CD14-positive monocyte (primary cell): ENCODE measurements at regions of chr12 and their contacts with region 1.

Region 1: DNA sequence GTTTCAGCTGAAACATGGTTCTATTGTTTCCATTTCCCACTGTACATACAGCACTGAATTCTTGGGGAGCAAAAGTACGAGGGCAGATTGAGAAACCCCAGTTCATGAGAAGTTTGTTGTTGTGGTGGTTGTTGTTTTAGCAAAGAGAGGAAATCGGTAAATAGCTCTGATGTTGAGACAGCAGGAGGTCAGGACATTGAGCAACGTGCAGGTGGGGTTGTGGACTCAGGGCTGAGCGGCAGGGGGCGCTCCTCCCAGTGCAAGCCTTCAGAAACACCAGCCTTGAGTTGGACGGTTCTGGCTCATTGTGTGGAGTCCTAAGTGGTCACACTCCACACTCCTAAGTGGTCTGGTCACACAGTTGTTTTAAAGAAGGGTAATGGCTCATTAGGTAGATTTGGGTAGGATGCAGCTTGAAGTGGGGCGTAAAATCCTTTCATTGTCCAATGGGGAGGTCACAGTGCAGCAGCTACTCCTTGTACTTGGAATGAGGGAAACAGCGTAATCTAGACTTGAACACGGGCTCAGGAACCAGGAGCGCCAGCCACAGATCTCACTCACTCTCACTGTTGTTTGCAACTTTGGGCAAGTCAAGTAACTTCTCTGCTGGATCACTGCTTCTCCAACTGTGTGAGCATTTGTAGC is 14.5 kb upstream of the PWP1 start:
- DNase-seq: peak in 2 of 3 donors; percentile 32 to 44
- H3K4me3 ChIP-seq: no peak overlapping the region
- H3K4me3 Mint-ChIP-seq: no peak overlapping the region
- H3K27ac ChIP-seq: no peak overlapping the region
- H3K27ac Mint-ChIP-seq: peak overlapping the region in 1 of 7 donors; percentile 78
- H3K4me1 ChIP-seq: peaks cover 0 to 10% of the 10 kb centered on the region in 2 donors
- H3K4me1 Mint-ChIP-seq: peaks cover 7% of the 10 kb centered on the region
- H3K27me3 ChIP-seq: no peaks in the 10 kb centered on the region
- H3K27me3 Mint-ChIP-seq: peaks cover 4 to 17% (median 6%) of the 10 kb centered on the region in 3 donors
- CTCF ChIP-seq: peak; percentile 73

Region 2: DNA sequence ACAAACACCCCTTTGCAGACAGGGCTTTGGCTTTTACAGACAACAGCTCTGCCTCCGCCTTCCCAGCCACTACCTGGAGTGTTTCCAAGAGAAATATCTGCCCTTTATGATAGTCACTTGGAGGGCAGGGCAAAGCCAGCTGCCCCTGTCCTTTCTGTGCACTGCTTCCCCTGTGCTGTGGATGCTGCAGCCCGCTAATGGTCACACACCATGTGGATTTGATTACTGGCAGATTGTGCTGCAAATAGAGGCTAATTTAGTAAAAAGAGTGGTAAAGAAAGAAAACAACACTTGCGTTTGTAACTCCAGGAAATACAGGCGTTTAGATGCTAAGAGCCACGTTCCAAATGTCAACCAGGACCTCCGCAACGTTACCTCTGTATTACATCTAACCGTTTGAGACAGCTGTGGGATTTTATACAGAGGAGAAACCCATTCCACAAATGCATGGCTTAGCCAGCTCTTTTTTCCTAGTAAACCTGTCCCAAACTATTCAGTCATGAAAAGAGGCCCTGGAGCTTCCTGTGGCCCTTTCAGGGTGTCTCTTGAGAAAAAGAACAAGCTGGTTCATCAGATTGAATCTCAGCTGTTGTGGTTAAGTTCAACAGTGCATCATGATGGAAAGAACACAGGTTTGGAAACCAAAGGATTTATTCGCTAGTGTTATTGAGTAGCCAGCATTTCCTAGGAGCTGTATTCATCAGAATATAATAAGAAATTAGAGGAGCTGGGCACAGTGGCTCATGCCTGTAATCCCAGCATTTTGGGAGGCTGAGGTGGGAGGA is 15.6 kb before region 1 on chr12:
- intact Hi-C with region 1: no loop called
- DNase-seq: no peak
- H3K4me3 ChIP-seq: no peak overlapping the region
- H3K4me3 Mint-ChIP-seq: no peak overlapping the region
- H3K27ac ChIP-seq: no peak overlapping the region
- H3K27ac Mint-ChIP-seq: peak overlapping the region in 1 of 7 donors; percentile 72
- H3K4me1 ChIP-seq: peaks cover under 1 to 8% of the 10 kb centered on the region in 2 donors
- H3K4me1 Mint-ChIP-seq: peaks cover 6% of the 10 kb centered on the region
- H3K27me3 ChIP-seq: no peaks in the 10 kb centered on the region
- H3K27me3 Mint-ChIP-seq: no peaks in the 10 kb centered on the region
- CTCF ChIP-seq: no peak

Region 3: GRCh38 chr12:107955966-107956643 is 285.0 kb after region 1 on chr12:
- intact Hi-C with region 1: no loop called
- DNase-seq: no peak
- H3K4me3 ChIP-seq: no peak overlapping the region
- H3K4me3 Mint-ChIP-seq: no peak overlapping the region
- H3K27ac ChIP-seq: no peak overlapping the region
- H3K27ac Mint-ChIP-seq: peak overlapping the region in 2 of 7 donors; percentile 10 to 14
- H3K4me1 ChIP-seq: no peaks in the 10 kb centered on the region
- H3K4me1 Mint-ChIP-seq: no peaks in the 10 kb centered on the region
- H3K27me3 ChIP-seq: no peaks in the 10 kb centered on the region
- H3K27me3 Mint-ChIP-seq: peaks cover 5 to 14% (median 8%) of the 10 kb centered on the region in 3 donors
- CTCF ChIP-seq: no peak

Region 4: DNA sequence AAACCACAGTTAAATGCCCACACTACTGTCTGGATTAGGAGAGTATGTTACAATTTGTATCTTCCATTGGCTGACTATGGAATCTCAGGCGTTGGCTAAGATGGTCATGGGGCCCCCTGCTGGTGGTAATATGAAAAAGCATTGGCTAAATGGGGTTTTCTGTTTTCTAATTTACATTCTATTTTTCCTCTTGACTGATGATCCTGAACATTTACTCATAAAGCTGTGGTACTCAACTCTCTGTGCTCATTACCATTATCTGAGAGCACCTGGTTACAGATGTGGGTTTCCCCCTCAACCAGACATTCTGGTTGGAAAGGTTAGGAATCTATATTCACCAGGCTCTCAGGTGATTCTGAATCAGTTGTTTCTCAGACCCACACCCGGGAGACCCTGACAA is 522.8 kb after region 1 on chr12:
- intact Hi-C with region 1: loop called in 1 of 2 experiments (anchors 10 kb)
- DNase-seq: peak; percentile 5 to 28 (median 26)
- H3K4me3 ChIP-seq: no peak overlapping the region
- H3K4me3 Mint-ChIP-seq: no peak overlapping the region
- H3K27ac ChIP-seq: no peak overlapping the region
- H3K27ac Mint-ChIP-seq: no peak overlapping the region
- H3K4me1 ChIP-seq: no peaks in the 10 kb centered on the region
- H3K4me1 Mint-ChIP-seq: no peaks in the 10 kb centered on the region
- H3K27me3 ChIP-seq: no peaks in the 10 kb centered on the region
- H3K27me3 Mint-ChIP-seq: peaks cover 1 to 7% (median 3%) of the 10 kb centered on the region in 3 donors
- CTCF ChIP-seq: peak; percentile 92

Region 5: GRCh38 chr12:108514973-108515814 is 844.1 kb after region 1 on chr12 and contains the start of gene FICD:
- intact Hi-C with region 1: loop called in 1 of 2 experiments (anchors 10 kb)
- DNase-seq: peak; percentile 98
- H3K4me3 ChIP-seq: peak within 1 kb of the TSS; percentile 66 to 93 (median 85)
- H3K4me3 Mint-ChIP-seq: peak within 1 kb of the TSS; percentile 89 to 93
- H3K27ac ChIP-seq: peak within 1 kb of the TSS; percentile 49 to 87
- H3K27ac Mint-ChIP-seq: peak within 1 kb of the TSS; percentile 84 to 96 (median 93)
- H3K4me1 ChIP-seq: peaks cover 13 to 24% of the 10 kb centered on the region in 2 donors
- H3K4me1 Mint-ChIP-seq: peaks cover 24% of the 10 kb centered on the region
- H3K27me3 ChIP-seq: no peaks in the 10 kb centered on the region
- H3K27me3 Mint-ChIP-seq: peaks cover 9 to 14% (median 11%) of the 10 kb centered on the region in 3 donors
- CTCF ChIP-seq: no peak
- polyA plus RNA-seq, gene FICD: 1.00 to 1.9 (median 1.6) TPM